MCF 10A (cell line): ENCODE measurements at regions of chr1 and their contacts with region 1.

Region 1: GRCh38 chr1:151047925-151048645 is 534 bp downstream of the C1orf56 start:
- DNase-seq: peak; percentile 79
- H3K4me3 Mint-ChIP-seq: peak overlapping the region; percentile 85
- H3K27ac Mint-ChIP-seq: peak overlapping the region; percentile 79
- H3K4me1 Mint-ChIP-seq: peaks cover 21% of the 10 kb centered on the region
- H3K27me3 Mint-ChIP-seq: no peaks in the 10 kb centered on the region
- CTCF ChIP-seq: peak; percentile 36

Region 2: DNA sequence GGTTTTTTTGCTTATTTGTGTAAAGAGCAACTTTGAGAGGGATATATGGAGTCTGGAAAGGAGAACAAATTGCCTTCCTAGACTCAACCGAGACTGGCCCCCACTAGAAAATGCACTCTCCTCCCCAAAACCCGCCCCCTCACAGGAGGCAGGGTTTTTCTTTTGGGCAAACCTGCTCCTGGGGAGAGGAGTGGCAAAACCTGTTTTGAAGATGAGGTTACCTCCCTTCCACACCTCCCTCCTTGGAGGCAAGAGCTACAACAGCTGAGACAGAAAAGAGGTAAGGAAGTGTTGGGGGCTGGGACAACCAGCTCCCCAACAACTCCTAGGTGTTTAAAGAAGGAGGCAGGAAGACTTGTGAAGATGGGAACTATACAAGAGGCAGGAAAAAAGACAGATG is 11.7 kb before region 1 on chr1 and contains the start of gene BNIPL:
- CTCF ChIA-PET with region 1: interaction called, 5 read pairs
- POLR2A ChIA-PET with region 1: interaction called, 15 read pairs
- intact Hi-C with region 1: no loop called
- DNase-seq: no peak
- H3K4me3 Mint-ChIP-seq: no peak within 1 kb of the TSS
- H3K27ac Mint-ChIP-seq: no peak within 1 kb of the TSS
- H3K4me1 Mint-ChIP-seq: peaks cover 5% of the 10 kb centered on the region
- H3K27me3 Mint-ChIP-seq: no peaks in the 10 kb centered on the region
- CTCF ChIP-seq: no peak
- total RNA-seq, gene BNIPL: 1.2 and 2.3 TPM in 2 replicates

Region 3: DNA sequence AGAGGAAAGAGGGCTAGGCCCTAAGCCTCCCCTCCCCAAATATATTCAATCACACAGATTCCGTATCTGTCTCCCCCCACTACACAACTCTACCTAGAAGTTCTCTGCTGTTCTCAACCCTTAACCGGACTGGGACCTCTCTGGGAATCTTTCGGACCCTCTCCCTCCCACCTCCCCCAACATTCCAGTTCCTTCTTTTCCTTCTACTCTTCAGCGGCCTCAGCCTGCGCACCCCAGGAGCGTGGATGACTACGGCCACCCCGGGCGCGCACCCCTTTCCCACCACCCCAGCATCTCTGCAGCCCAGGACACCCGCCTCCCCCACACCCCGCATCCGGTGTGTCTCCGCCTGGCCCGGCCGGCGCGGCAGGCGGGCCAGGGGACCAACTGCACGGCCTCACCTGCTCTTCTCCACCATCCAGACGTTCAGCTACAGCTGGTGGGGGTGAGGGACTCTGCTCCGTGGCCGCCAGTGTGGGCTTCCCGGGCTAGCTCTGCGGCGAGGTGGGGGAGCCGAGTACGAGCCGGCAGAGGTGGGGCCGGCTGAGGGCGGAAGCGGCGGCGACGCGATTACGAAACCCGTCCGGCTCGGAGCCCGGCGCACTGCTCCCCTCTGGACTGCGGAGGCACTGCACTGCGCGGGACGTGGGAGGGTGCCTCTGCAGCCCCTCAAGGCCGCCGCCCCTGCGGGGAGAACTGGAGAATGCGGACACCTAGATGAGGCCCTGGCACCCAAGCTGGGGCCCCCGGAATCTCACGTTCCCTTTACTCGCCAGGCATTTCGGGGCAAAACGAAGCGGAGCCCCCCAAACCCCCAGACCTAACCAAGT is 11.2 kb after region 1 on chr1 and contains the start of gene CDC42SE1:
- CTCF ChIA-PET with region 1: interaction called, 17 read pairs
- POLR2A ChIA-PET with region 1: interaction called, 90 read pairs
- intact Hi-C with region 1: no loop called
- DNase-seq: peak; percentile 85
- H3K4me3 Mint-ChIP-seq: peak within 1 kb of the TSS; percentile 82
- H3K27ac Mint-ChIP-seq: peak within 1 kb of the TSS; percentile 92
- H3K4me1 Mint-ChIP-seq: peaks cover 61% of the 10 kb centered on the region
- H3K27me3 Mint-ChIP-seq: no peaks in the 10 kb centered on the region
- CTCF ChIP-seq: peak; percentile 91
- total RNA-seq, gene CDC42SE1: 134 and 139 TPM in 2 replicates